B cell (primary cell): ENCODE measurements at regions of chr10 and their contacts with region 1.

Region 1: GRCh38 chr10:125048101-125048864 is 106.4 kb downstream of the ZRANB1 start:
- DNase-seq: peak; percentile 63
- ATAC-seq: no peak
- H3K4me3 ChIP-seq: no peak overlapping the region
- H3K4me3 Mint-ChIP-seq: no peak overlapping the region
- H3K27ac ChIP-seq: no peak overlapping the region
- H3K27ac Mint-ChIP-seq: no peak overlapping the region
- H3K4me1 ChIP-seq: no peaks in the 10 kb centered on the region
- H3K4me1 Mint-ChIP-seq: no peaks in the 10 kb centered on the region
- H3K27me3 ChIP-seq: peaks cover 0 to 57% (median 19%) of the 10 kb centered on the region in 4 experiments
- H3K27me3 Mint-ChIP-seq: peaks cover 56% of the 10 kb centered on the region
- CTCF ChIP-seq: peak; percentile 80

Region 2: GRCh38 chr10:125217986-125218680 is 169.8 kb after region 1 on chr10:
- CTCF ChIA-PET with region 1: no interaction called
- POLR2A ChIA-PET with region 1: no interaction called
- intact Hi-C with region 1: loop called (anchors 5 kb)
- DNase-seq: no peak
- ATAC-seq: no peak
- H3K4me3 ChIP-seq: no peak overlapping the region
- H3K4me3 Mint-ChIP-seq: no peak overlapping the region
- H3K27ac ChIP-seq: no peak overlapping the region
- H3K27ac Mint-ChIP-seq: no peak overlapping the region
- H3K4me1 ChIP-seq: no peaks in the 10 kb centered on the region
- H3K4me1 Mint-ChIP-seq: no peaks in the 10 kb centered on the region
- H3K27me3 ChIP-seq: peaks cover 0 to 5% (median 1%) of the 10 kb centered on the region in 4 experiments
- H3K27me3 Mint-ChIP-seq: peaks cover 21% of the 10 kb centered on the region
- CTCF ChIP-seq: no peak